ENCODE measurements at regions of chr17 and their contacts with region 1.

Region 1: DNA sequence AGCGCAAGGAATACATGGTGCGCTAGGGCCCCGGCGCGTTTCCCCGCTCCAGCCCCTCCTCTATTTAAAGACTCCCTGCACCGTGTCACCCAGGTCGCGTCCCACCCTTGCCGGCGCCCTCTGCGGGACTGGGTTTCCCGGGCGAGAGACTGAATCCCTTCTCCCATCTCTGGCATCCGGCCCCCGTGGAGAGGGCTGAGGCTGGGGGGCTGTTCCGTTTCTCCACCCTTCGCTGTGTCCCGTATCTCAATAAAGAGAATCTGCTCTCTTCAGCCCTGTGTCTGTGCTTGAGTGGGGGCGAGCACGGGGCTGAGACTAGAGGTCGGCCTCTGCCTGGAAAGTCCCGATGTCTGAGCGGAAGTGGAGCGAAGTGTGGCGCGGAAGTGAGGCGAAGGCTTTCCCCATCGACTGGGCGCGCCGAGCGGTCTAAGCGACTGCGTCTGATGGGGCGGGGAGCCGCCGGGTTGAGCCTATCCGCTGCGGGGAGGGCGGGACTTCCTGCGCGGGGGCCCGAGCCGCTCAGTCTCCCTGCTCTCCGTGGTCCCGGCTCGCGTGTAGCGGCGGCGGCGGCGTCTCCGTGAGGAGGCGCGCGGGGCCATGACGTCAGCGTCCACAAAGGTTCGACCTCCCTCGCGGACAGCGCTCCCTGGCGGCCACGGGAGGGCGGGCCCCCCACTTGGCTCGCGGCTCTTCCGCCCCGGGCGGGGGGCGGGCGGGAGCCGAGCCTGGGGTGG is 2.0 kb downstream of the RNASEK start:
- DNase-seq: peak; percentile 95 to 99 (median 98)

Region 2: DNA sequence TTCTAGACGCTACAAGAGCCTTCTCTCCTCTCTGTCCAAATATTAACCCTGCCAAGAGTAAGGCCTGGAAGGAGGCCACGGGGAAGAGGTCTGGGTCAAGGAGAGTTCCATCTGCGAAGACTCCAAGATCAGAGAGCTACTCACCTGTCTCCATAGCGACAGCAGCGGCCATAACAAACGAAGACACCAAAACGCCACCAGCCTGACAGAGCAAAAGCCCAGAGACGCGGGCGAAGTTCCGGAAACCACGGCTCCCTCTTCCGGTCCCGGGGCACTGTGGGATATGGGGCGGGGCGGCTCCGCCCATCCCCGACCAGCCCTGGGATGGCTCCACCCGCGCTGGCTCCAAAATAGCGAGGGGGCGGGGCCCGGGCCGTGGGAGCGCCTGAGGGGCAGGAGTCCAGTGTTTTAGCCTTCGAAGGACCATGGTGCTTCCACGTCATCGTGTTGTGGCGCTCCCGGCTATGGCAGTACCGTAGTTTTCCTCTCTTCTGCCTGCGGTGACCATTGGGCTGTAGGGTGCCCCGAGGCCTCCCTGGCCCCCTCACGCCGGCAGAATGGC is 363.0 kb before region 1 on chr17 and contains the starts of genes C17orf100 and MED31:
- intact Hi-C with region 1: loop called (anchors 5 kb)
- DNase-seq: peak; percentile 82 to 98 (median 96)

Region 3: DNA sequence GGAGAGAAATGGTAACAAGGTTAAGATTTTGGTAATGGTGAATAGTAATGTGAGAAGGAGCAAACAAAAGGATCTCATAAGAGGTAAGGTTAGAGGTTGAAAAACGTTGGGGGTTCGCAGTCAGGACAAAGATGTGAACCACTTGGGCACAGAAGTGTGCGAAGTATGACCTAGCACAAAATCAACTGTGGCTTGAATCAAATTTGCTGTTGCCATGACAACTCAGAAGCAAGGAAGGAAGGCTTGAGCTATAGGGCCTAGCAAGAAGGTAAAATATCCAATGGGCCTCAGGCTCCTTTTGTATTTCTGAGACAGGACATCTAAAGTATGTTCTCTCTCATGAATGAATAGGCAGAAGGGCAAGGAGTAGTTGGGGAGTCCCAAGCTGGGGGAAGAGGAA is 158.4 kb before region 1 on chr17:
- intact Hi-C with region 1: no loop called
- DNase-seq: no peak